HCT116 (cell line): ENCODE measurements at regions of chr7 and their contacts with region 1.

Region 1: DNA sequence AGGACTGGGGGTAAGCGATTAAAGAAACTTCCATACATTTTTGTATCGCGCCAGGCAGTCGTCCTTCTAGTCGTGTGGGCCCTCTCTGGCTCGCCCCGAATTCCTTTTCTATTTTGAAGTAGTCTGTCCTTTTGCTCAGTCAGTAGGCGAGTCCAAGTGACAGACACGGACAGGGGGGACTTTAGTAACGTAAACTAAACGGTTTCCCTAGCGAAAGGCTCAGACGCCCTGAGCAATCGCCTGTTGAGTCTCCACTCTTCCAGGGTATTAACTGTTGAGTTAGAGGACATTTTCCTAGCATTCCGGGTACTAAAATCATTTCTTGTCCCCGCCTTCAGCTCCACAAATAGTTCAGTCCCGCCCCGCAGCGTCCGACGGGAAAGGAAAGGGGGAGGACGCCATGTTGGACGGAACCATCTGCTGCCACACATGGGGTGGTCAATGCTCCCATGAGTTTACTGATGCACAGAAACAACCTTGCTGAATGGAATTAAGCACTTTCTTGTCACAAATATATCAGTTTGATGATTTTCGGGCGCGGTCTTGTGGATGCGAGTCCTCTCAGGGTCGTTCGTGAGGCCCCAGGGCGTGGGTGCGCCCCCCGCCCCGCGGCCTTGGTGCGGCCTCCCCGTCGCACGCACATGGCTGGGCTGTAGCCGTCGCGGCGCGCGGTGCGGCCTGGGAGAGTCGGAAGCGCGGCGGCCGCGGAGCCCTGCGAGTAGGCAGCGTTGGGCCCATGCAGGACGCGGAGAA is at the start of gene EIF3B:
- DNase-seq: peak; percentile 91
- ATAC-seq: peak; percentile 83
- H3K4me3 ChIP-seq: peak within 1 kb of the TSS; percentile 98 to 99
- H3K27ac ChIP-seq: peak within 1 kb of the TSS; percentile 78
- H3K4me1 ChIP-seq: peaks cover 6 to 33% of the 10 kb centered on the region in 2 experiments
- H3K27me3 ChIP-seq: no peaks in the 10 kb centered on the region
- CTCF ChIP-seq: no peak
- POLR2A ChIP-seq: peak; percentile 51
- RAD21 ChIP-seq: no peak
- total RNA-seq, gene EIF3B: 324 TPM

Region 2: DNA sequence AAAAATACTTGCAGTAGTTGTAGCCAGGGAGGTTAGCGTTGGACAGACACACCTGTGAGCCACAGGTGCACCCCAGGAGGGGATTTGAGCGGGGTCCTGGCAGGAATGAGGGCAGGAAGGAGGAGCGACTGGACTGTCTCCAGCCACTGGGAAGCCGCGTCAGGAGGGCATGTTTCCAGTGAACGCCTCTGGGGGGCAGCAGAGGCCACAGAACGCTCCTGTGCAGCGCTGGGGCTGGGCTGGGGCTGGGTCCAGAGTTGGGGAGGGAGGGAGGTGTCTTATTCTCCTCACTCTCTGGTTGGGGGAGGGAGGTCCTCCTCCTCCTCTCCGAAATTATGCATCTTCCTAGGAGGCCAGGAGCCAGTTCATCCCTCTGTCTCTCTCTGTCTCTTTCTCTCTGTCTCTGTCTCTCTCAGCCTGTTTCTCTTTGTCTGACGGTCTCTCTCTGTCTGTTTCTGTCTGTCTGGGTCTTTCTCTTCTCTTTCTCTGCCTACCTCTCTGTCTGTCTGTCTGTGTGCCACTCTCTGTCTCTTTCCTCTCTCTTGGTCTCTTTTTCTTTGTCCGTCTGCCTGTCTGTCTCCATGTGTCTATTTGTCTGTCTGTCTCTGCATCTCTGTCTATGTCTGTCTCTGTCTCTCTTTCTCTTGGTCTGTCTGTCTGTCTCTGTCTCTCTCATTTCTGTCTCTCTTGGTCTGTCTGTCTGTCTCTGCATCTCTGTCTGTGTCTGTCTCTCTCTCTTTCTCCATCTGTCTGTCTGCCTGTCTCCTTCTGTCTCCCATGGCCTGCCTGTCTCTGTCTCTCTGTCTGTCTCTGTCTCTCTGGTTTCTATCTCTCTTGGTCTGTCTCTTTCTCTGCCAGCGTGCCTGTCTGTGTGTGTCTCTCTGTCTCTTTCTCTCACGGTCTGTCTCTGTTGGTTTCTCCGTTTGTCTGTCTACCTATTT is 774.6 kb before region 1 on chr7:
- CTCF ChIA-PET with region 1: no interaction called
- POLR2A ChIA-PET with region 1: no interaction called
- RAD21 ChIA-PET with region 1: no interaction called
- intact Hi-C with region 1: loop called (anchors 5 kb)
- DNase-seq: no peak
- ATAC-seq: peak; percentile 99
- H3K4me3 ChIP-seq: no peak overlapping the region
- H3K27ac ChIP-seq: no peak overlapping the region
- H3K4me1 ChIP-seq: peaks cover 0 to 8% of the 10 kb centered on the region in 2 experiments; a peak in 1 of 4 replicates
- H3K27me3 ChIP-seq: no peaks in the 10 kb centered on the region
- CTCF ChIP-seq: peak; percentile 81 to 86 (median 84)
- POLR2A ChIP-seq: no peak
- RAD21 ChIP-seq: peak; percentile 96

Region 3: DNA sequence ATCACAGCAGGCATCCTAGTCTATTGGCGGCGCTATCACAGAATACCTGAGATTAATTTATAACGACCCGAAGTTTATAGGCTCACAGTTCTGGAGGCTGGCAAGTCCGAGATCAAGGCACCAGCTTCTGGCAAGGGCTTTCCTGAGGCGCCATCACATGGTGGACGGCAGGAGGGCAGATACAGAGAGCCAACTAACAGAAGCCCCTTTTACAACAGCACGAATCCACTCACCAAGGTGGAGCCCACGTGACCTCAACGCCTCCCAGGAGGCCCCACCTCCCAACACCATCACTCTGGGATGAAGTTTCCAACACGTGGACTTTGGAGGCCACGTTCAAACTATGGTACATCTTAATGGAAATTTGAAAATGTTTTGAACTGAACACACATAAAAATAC is 429.0 kb before region 1 on chr7:
- CTCF ChIA-PET with region 1: no interaction called
- POLR2A ChIA-PET with region 1: no interaction called
- RAD21 ChIA-PET with region 1: interaction called in 1 of 2 experiments, 3 read pairs
- intact Hi-C with region 1: loop called (anchors 5 kb)
- DNase-seq: no peak
- ATAC-seq: peak; percentile 58; the same call in 1 of the 2 replicates
- H3K4me3 ChIP-seq: no peak overlapping the region
- H3K27ac ChIP-seq: no peak overlapping the region
- H3K4me1 ChIP-seq: no peaks in the 10 kb centered on the region
- H3K27me3 ChIP-seq: no peaks in the 10 kb centered on the region
- CTCF ChIP-seq: peak in 2 of 3 experiments; percentile 27 to 31; a peak in 2 of 6 replicates
- POLR2A ChIP-seq: no peak
- RAD21 ChIP-seq: peak; percentile 47

Region 4: GRCh38 chr7:2109936-2110585 is 244.3 kb before region 1 on chr7:
- CTCF ChIA-PET with region 1: no interaction called
- POLR2A ChIA-PET with region 1: no interaction called
- RAD21 ChIA-PET with region 1: no interaction called
- intact Hi-C with region 1: loop called (anchors 5 kb)
- DNase-seq: peak; percentile 94
- ATAC-seq: peak; percentile 89
- H3K4me3 ChIP-seq: peak overlapping the region; percentile 48 to 58
- H3K27ac ChIP-seq: peak overlapping the region; percentile 94
- H3K4me1 ChIP-seq: peaks cover 49 to 92% of the 10 kb centered on the region in 2 experiments
- H3K27me3 ChIP-seq: no peaks in the 10 kb centered on the region
- CTCF ChIP-seq: no peak
- POLR2A ChIP-seq: no peak
- RAD21 ChIP-seq: no peak

Region 5: DNA sequence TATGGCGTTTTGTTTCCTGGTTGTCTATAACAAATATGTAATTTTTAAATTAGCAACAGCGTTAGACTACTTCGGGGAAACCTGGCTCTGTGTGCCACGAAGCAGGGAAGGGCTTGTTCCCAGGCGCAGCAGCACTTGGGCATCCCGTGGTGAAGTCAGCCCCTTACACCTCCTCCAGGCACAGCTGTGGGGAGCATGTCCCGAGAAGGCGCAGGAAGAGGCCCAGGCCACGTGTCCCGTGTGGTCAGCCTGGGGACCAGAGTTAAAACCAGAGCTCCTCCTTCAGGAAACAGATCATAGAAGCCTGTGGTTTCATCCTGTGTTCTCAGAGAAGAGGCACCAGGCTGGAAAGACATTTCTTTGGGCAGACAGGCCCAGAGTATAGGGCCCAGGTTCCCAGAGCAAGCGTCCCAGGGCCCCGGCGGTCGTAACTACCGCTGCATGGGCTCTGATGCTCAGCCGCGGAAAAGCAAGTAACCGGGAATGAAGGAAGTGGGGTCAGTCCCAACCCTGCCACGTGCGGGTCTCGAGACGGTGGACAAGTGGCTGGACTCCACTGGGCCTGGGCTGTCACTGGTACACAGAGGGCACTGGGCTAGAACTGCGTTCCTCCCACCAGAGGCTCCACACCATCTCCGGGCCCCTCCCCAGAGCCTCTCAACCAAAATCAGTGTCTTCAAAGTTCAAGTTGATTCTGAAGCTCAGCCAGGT is 105.2 kb before region 1 on chr7:
- CTCF ChIA-PET with region 1: no interaction called
- POLR2A ChIA-PET with region 1: interaction called, 3 read pairs
- RAD21 ChIA-PET with region 1: no interaction called
- intact Hi-C with region 1: loop called (anchors 2 kb)
- DNase-seq: no peak
- ATAC-seq: peak; percentile 13; the same call in 1 of the 2 replicates
- H3K4me3 ChIP-seq: no peak overlapping the region
- H3K27ac ChIP-seq: no peak overlapping the region
- H3K4me1 ChIP-seq: 0 out of 4 replicates have a peak, but pooled peaks cover 0 to 5% of the 10 kb centered on the region in 2 experiments
- H3K27me3 ChIP-seq: no peaks in the 10 kb centered on the region
- CTCF ChIP-seq: no peak
- POLR2A ChIP-seq: no peak
- RAD21 ChIP-seq: no peak

Region 6: DNA sequence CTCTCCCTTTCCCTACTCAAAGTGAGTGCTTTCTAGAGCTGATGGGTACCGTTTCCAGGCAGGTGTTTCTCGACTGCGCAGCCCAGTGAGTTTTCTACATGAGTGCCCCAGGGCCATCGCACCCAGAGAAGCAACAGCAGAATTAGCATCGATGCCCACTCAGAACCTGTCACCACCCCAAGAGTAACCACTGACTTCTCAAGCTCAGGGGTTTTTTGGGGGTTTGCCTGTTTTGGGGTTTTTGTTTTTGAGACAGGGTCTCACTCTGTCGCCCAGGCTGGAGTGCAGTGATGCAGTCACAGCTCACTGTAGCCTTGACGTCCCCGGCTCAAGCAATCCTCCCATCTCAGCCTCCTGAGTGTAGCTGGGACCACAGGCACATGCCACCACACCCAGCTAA is 65.9 kb before region 1 on chr7:
- CTCF ChIA-PET with region 1: no interaction called
- POLR2A ChIA-PET with region 1: no interaction called
- RAD21 ChIA-PET with region 1: no interaction called
- intact Hi-C with region 1: no loop called
- DNase-seq: no peak
- ATAC-seq: no peak
- H3K4me3 ChIP-seq: no peak overlapping the region
- H3K27ac ChIP-seq: no peak overlapping the region
- H3K4me1 ChIP-seq: no peaks in the 10 kb centered on the region
- H3K27me3 ChIP-seq: no peaks in the 10 kb centered on the region
- CTCF ChIP-seq: no peak
- POLR2A ChIP-seq: no peak
- RAD21 ChIP-seq: no peak

Region 7: GRCh38 chr7:2314209-2314955 is 40.0 kb before region 1 on chr7 and contains the start of gene SNX8:
- CTCF ChIA-PET with region 1: no interaction called
- POLR2A ChIA-PET with region 1: no interaction called
- RAD21 ChIA-PET with region 1: no interaction called
- intact Hi-C with region 1: loop called (anchors 2 kb)
- DNase-seq: peak; percentile 76
- ATAC-seq: peak; percentile 83
- H3K4me3 ChIP-seq: peak within 1 kb of the TSS; percentile 81 to 84
- H3K27ac ChIP-seq: peak within 1 kb of the TSS; percentile 36; the same call in 1 of the 2 replicates
- H3K4me1 ChIP-seq: peaks cover 16 to 43% of the 10 kb centered on the region in 2 experiments
- H3K27me3 ChIP-seq: no peaks in the 10 kb centered on the region
- CTCF ChIP-seq: no peak
- POLR2A ChIP-seq: no peak
- RAD21 ChIP-seq: no peak
- total RNA-seq, gene SNX8: 41.7 TPM

Region 8: GRCh38 chr7:2844165-2844898 is 490.0 kb after region 1 on chr7 and contains the start of gene GNA12:
- CTCF ChIA-PET with region 1: no interaction called
- POLR2A ChIA-PET with region 1: no interaction called
- RAD21 ChIA-PET with region 1: no interaction called
- intact Hi-C with region 1: no loop called
- DNase-seq: peak; percentile 97
- ATAC-seq: peak; percentile 96
- H3K4me3 ChIP-seq: peak within 1 kb of the TSS; percentile 60 to 73
- H3K27ac ChIP-seq: peak within 1 kb of the TSS; percentile 70; the same call in 1 of the 2 replicates
- H3K4me1 ChIP-seq: peaks cover 0 to 26% of the 10 kb centered on the region in 2 experiments; a peak in 2 of 4 replicates
- H3K27me3 ChIP-seq: no peaks in the 10 kb centered on the region
- CTCF ChIP-seq: no peak
- POLR2A ChIP-seq: peak; percentile 68
- RAD21 ChIP-seq: no peak
- total RNA-seq, gene GNA12: 32.6 TPM